CD8-positive, alpha-beta T cell (primary cell): ENCODE measurements at regions of chr17 and their contacts with region 1.

Region 1: GRCh38 chr17:7435221-7435675 is at the start of gene TMEM102:
- DNase-seq: peak; percentile 96 to 99 (median 98)
- ATAC-seq: peak; percentile 81
- H3K4me3 ChIP-seq: peak within 1 kb of the TSS; percentile 70 to 82
- H3K4me3 Mint-ChIP-seq: peak within 1 kb of the TSS; percentile 92
- H3K27ac ChIP-seq: peak within 1 kb of the TSS; percentile 66 to 90
- H3K27ac Mint-ChIP-seq: peak within 1 kb of the TSS; percentile 95
- H3K4me1 ChIP-seq: peaks cover 38% of the 10 kb centered on the region
- H3K4me1 Mint-ChIP-seq: peaks cover 38% of the 10 kb centered on the region
- H3K27me3 ChIP-seq: peaks cover 0 to 4% of the 10 kb centered on the region in 2 experiments
- H3K27me3 Mint-ChIP-seq: peaks cover 12% of the 10 kb centered on the region
- CTCF ChIP-seq: no peak
- total RNA-seq, gene TMEM102: 13.2 to 15.3 TPM

Region 2: DNA sequence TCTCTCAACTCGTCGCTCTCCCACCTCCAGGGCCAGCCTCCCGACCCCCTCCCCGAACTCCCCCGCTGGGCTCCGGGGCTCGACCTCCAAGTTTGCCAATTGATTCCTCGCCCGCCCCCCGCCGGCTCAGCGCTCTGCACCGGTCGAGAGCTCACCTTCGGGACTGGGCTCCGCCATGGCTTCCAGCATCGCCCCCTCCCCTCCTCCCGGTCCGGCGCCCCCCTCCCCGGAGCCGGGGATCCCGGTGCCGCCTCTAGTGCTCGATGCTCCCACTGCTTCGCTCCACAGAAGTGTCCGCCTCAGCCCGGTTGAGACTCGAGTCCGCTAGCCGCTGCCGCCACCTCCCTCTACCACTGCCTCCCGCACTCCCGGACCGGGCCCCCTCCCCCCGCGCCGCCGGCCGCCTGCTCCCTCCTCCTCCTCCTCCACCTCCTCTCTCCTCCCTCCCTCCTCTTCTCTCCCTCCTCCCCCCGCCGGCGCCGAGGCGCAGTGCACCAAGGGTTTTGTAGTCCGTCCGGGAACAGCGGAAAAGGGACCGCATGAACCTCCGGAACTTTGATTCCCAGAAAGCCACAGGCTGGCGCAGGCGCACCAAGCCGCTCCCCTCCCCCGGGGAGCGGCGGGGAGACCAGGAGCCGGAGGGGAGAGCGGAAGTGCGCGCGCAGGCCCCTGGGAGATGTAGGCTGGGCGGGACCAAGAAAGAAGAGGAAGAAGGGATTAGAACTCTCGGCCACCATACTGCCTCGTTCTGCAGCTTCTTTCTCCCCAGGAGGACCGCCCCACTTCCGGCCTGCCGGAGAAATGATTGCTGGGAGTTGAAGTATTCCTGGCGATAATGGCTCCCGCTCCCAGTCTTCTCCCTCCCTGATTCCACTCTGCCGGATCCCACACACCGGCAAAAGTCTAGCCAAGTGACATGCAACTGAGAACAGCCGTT is 195.9 kb before region 1 on chr17 and contains the start of gene PHF23:
- CTCF ChIA-PET with region 1: interaction called, 3 read pairs
- POLR2A ChIA-PET with region 1: no interaction called
- intact Hi-C with region 1: loop called (anchors 1 kb)
- DNase-seq: peak; percentile 93 to 99 (median 97)
- ATAC-seq: peak; percentile 64
- H3K4me3 ChIP-seq: peak within 1 kb of the TSS; percentile 87 to 90
- H3K4me3 Mint-ChIP-seq: peak within 1 kb of the TSS; percentile 98
- H3K27ac ChIP-seq: peak within 1 kb of the TSS; percentile 64 to 100
- H3K27ac Mint-ChIP-seq: peak within 1 kb of the TSS; percentile 90
- H3K4me1 ChIP-seq: peaks cover 37% of the 10 kb centered on the region
- H3K4me1 Mint-ChIP-seq: peaks cover 58% of the 10 kb centered on the region
- H3K27me3 ChIP-seq: no peaks in the 10 kb centered on the region
- H3K27me3 Mint-ChIP-seq: no peaks in the 10 kb centered on the region
- CTCF ChIP-seq: no peak
- total RNA-seq, gene PHF23: 2.8 to 3.1 TPM

Region 3: DNA sequence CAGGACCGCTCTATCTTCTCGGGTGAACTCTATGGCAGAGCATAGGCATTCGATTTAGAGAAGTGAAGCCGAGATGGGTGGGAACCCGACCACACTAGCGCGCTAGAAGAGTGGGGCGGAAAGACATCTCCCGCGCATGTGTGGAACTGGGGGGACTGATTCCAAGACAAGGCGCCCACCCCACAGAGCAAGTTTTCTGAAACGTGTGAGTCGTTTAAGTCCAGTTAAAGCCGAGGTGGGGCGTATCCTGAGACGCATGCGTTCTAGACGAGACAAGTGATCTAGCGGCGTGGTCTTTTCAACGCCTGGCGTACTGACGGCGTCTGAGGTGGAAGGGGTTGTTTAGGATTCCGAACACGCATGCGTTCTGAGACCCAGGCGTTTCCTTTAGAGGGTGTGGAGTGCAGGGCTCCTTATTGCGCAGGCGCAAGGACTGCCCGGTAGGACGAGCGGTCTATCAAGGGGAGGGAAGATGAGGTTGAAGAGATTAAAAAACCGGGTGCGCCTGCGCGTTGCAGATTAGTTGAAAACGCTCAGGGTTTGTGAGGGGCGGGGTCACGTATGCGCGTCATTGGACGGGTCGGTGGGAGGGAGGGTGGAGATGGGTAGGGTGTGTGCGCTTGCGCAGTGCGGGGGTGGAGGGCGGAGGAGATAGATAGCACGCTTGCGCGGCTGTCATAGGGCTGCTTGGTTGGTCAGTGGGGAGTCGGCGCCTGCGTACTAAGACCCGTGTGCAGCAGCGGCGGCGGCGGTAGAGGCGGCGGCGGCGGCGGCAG is 128.1 kb before region 1 on chr17 and contains the start of gene EIF5A:
- CTCF ChIA-PET with region 1: interaction called, 5 read pairs
- POLR2A ChIA-PET with region 1: interaction called, 3 read pairs
- intact Hi-C with region 1: loop called (anchors 1 kb)
- DNase-seq: peak; percentile 100
- ATAC-seq: peak; percentile 67
- H3K4me3 ChIP-seq: peak within 1 kb of the TSS; percentile 66 to 92
- H3K4me3 Mint-ChIP-seq: peak within 1 kb of the TSS; percentile 98
- H3K27ac ChIP-seq: peak within 1 kb of the TSS; percentile 91 to 94
- H3K27ac Mint-ChIP-seq: peak within 1 kb of the TSS; percentile 99
- H3K4me1 ChIP-seq: peaks cover 25% of the 10 kb centered on the region
- H3K4me1 Mint-ChIP-seq: peaks cover 40% of the 10 kb centered on the region
- H3K27me3 ChIP-seq: no peaks in the 10 kb centered on the region
- H3K27me3 Mint-ChIP-seq: no peaks in the 10 kb centered on the region
- CTCF ChIP-seq: no peak
- total RNA-seq, gene EIF5A: 581 to 613 TPM

Region 4: DNA sequence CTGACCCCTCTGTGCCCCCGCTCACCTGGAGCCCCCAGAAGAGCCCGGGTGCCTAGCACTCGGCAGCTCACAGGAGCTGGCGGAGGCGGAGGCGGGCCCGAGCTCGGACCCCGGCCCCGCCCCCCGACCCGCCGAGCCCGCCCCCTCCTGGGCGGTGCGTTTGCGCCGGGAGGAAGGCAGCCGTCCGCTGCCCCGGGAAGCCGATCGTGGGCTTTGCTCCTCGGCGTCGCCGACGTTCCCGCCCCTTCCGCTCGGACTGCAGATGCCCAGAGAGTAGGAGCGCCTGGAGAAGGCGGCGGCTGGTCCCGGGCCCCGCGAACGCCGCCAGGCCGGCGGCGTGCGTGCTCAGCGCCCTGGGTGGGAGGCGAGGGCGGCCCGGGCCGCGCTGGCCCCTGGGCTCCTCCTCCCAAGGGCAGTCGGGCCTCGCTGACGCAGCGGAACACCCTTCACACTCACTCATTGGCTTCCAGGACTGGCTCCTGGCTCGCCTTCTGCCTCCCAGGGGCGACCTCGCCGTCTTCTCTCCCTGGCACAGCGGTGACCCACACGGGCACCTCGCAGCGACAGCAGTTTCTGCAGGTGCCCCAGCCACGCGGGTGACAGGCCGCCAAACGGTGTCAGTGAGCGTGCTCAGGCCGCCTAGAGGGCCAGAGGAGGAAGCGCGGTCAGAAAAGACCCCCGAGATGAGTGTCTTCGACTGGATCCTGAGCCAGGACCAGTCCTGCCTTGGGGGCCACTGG is 40.6 kb before region 1 on chr17 and contains the start of gene PLSCR3:
- CTCF ChIA-PET with region 1: interaction called, 8 read pairs
- POLR2A ChIA-PET with region 1: interaction called, 3 read pairs
- intact Hi-C with region 1: loop called in 1 of 2 experiments (anchors 2 kb)
- DNase-seq: peak; percentile 65 to 92 (median 80)
- ATAC-seq: peak; percentile 88
- H3K4me3 ChIP-seq: peak within 1 kb of the TSS; percentile 81 to 84
- H3K4me3 Mint-ChIP-seq: peak within 1 kb of the TSS; percentile 92
- H3K27ac ChIP-seq: peak within 1 kb of the TSS; percentile 68 to 72
- H3K27ac Mint-ChIP-seq: peak within 1 kb of the TSS; percentile 92
- H3K4me1 ChIP-seq: peaks cover 33% of the 10 kb centered on the region
- H3K4me1 Mint-ChIP-seq: peaks cover 26% of the 10 kb centered on the region
- H3K27me3 ChIP-seq: no peaks in the 10 kb centered on the region
- H3K27me3 Mint-ChIP-seq: no peaks in the 10 kb centered on the region
- CTCF ChIP-seq: no peak
- total RNA-seq, gene PLSCR3: 38.1 TPM

Region 5: GRCh38 chr17:7496470-7497183 is 61.4 kb after region 1 on chr17:
- CTCF ChIA-PET with region 1: interaction called, 12 read pairs
- POLR2A ChIA-PET with region 1: interaction called, 3 read pairs
- intact Hi-C with region 1: no loop called
- DNase-seq: peak in 1 of 9 experiments; percentile 14
- ATAC-seq: no peak
- H3K4me3 ChIP-seq: no peak overlapping the region
- H3K4me3 Mint-ChIP-seq: no peak overlapping the region
- H3K27ac ChIP-seq: no peak overlapping the region
- H3K27ac Mint-ChIP-seq: no peak overlapping the region
- H3K4me1 ChIP-seq: peaks cover 3% of the 10 kb centered on the region
- H3K4me1 Mint-ChIP-seq: peaks cover 29% of the 10 kb centered on the region
- H3K27me3 ChIP-seq: no peaks in the 10 kb centered on the region
- H3K27me3 Mint-ChIP-seq: no peaks in the 10 kb centered on the region
- CTCF ChIP-seq: no peak

Region 6: DNA sequence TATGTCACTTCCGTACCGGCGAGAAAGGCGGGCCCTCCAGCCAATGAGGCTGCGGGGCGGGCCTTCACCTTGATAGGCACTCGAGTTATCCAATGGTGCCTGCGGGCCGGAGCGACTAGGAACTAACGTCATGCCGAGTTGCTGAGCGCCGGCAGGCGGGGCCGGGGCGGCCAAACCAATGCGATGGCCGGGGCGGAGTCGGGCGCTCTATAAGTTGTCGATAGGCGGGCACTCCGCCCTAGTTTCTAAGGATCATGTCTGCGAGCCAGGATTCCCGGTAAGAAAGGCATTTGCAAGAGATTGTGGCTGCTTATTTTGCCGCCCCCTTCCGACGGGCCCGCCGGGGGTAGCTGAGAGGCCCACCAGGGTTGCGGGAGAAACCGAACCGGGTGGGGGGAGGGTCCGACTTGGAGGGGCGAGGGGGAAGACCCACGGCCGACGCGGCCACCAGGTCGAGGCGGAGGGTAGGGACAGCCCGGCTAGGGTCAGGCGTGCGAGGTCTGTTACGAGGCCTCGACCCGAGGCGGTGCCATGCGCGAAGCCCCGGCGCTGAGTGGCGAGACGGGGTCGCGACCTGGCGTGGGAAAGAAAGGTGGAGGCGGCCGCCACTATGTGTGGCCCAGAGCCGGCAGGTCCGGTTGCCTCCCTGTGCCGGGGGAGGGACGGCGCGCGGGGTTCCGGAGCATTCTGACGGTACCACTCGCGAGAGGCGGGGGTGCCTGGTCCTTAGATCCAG is 137.5 kb after region 1 on chr17:
- CTCF ChIA-PET with region 1: interaction called, 3 read pairs
- POLR2A ChIA-PET with region 1: interaction called, 22 read pairs
- intact Hi-C with region 1: loop called (anchors 1 kb)
- DNase-seq: peak in 8 of 9 experiments; percentile 99 to 100 (median 100)
- ATAC-seq: peak; percentile 83
- H3K4me3 ChIP-seq: peak overlapping the region; percentile 97 to 100
- H3K4me3 Mint-ChIP-seq: peak overlapping the region; percentile 99
- H3K27ac ChIP-seq: peak overlapping the region; percentile 98 to 99
- H3K27ac Mint-ChIP-seq: peak overlapping the region; percentile 96
- H3K4me1 ChIP-seq: peaks cover 28% of the 10 kb centered on the region
- H3K4me1 Mint-ChIP-seq: peaks cover 48% of the 10 kb centered on the region
- H3K27me3 ChIP-seq: no peaks in the 10 kb centered on the region
- H3K27me3 Mint-ChIP-seq: no peaks in the 10 kb centered on the region
- CTCF ChIP-seq: no peak